B cell (primary cell): ENCODE measurements at regions of chr12 and their contacts with region 1.

Region 1: DNA sequence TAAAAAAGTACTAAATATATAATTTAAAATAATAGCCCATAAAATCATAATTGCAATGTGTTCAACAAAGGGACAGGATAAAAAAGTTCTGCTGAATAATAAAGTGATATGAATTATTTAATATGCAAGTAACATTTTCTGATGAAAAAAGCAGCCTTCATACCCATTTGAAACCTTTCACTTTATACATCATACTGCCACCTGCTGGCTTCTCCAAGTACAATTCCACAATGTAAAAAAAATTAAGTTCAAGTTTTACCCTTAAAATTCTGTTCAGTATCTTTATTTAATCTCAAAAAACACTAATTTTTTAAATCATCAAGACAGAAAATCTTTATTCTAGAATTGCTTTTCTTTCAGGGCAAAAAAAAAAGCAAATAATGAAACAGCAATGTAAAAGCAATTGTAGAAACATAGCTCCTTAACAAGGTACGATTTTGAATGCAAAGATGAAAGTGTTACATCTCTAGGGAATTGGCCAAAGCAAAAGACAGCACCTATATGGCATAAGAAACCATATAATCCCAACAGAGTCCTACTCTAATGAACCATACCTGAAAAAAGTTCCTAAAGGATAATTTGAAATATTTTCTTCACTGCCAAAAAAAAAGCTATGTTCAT is 15.0 kb downstream of the MDM1 start:
- DNase-seq: peak; percentile 65
- ATAC-seq: no peak
- H3K4me3 ChIP-seq: no peak overlapping the region
- H3K4me3 Mint-ChIP-seq: no peak overlapping the region
- H3K27ac ChIP-seq: no peak overlapping the region
- H3K27ac Mint-ChIP-seq: no peak overlapping the region
- H3K4me1 ChIP-seq: no peaks in the 10 kb centered on the region
- H3K4me1 Mint-ChIP-seq: no peaks in the 10 kb centered on the region
- H3K27me3 ChIP-seq: no peaks in the 10 kb centered on the region
- H3K27me3 Mint-ChIP-seq: no peaks in the 10 kb centered on the region
- CTCF ChIP-seq: peak; percentile 89

Region 2: DNA sequence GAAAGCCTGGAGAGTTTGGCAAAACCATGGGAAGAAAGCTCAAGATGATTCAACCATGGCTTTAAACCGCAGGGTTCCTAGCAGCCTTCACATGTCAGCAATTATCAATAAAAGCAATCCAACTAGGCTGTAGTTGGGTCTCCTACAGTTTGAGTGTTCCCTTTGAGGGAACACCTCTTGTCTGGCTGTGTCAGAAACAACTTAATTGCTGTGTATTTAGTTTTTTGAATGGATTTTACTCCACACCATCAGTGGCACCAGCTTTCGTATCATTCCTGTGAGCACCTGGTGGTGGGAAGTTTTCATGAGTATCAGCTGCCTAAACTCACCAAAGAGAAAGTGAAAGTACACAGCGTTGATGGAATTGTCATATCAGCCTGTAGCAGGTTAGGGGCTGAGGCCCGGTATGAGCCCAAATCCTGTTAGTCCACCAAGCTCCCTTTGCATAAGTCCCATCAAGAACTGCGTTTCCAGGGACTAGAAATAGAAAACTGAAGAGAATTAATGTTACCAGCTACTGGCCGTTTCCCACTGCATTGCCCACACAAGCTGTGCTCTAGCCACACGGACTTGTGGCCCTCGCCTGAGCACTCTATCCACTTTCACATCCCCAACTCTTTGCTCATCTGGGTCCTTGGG is 80.6 kb before region 1 on chr12:
- CTCF ChIA-PET with region 1: interaction called, 14 read pairs
- POLR2A ChIA-PET with region 1: no interaction called
- intact Hi-C with region 1: no loop called
- DNase-seq: peak; percentile 74
- ATAC-seq: peak; percentile 71
- H3K4me3 ChIP-seq: peak overlapping the region; percentile 6 to 62 (median 55)
- H3K4me3 Mint-ChIP-seq: peak overlapping the region; percentile 91
- H3K27ac ChIP-seq: peak overlapping the region; percentile 78 to 81
- H3K27ac Mint-ChIP-seq: peak overlapping the region; percentile 91
- H3K4me1 ChIP-seq: peaks cover 28 to 32% of the 10 kb centered on the region in 2 donors
- H3K4me1 Mint-ChIP-seq: peaks cover 33% of the 10 kb centered on the region
- H3K27me3 ChIP-seq: no peaks in the 10 kb centered on the region
- H3K27me3 Mint-ChIP-seq: no peaks in the 10 kb centered on the region
- CTCF ChIP-seq: no peak

Region 3: DNA sequence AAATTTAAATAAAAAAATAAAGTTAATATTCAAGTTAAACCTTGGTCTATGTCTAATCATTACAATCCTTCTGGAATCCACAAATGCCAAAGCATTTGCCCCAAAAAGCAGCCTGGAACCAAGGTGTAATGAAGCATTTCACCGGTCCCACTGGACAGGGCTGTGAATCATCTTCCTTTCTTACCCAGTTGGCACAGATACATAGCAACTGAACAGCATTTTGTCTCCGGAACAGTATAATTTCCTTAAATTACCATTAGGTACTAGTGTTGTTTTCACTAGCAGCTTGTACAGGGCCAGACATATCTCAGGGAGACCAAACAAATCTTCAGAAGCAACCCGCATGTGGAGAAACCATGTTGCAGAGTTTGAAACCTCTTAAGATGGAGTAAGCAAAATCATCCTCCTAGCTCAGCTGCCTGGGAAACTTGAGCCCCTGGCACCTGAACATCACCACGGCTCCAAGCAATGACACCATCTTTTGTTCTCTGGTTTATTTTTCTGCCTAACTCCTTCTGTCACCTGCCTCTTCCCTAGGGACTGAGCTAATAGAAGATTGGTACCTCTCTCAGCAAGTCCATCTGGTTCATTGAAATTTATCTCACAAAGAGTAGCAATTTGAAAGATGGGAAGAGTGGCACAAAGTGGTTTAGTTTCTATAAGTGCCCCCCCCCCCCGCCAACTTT is 32.9 kb after region 1 on chr12:
- CTCF ChIA-PET with region 1: no interaction called
- POLR2A ChIA-PET with region 1: no interaction called
- intact Hi-C with region 1: no loop called
- DNase-seq: no peak
- ATAC-seq: no peak
- H3K4me3 ChIP-seq: no peak overlapping the region
- H3K4me3 Mint-ChIP-seq: no peak overlapping the region
- H3K27ac ChIP-seq: no peak overlapping the region
- H3K27ac Mint-ChIP-seq: no peak overlapping the region
- H3K4me1 ChIP-seq: peaks cover 3 to 4% of the 10 kb centered on the region in 2 donors
- H3K4me1 Mint-ChIP-seq: peaks cover 4% of the 10 kb centered on the region
- H3K27me3 ChIP-seq: no peaks in the 10 kb centered on the region
- H3K27me3 Mint-ChIP-seq: no peaks in the 10 kb centered on the region
- CTCF ChIP-seq: no peak